Head of caudate nucleus (tissue), 42 donors: ENCODE measurements at regions of chr2 and their contacts with region 1.

Region 1: GRCh38 chr2:85538486-85539360 is at the start of gene MAT2A:
- DNase-seq: peak; percentile 81 to 97 (median 94)

Region 2: DNA sequence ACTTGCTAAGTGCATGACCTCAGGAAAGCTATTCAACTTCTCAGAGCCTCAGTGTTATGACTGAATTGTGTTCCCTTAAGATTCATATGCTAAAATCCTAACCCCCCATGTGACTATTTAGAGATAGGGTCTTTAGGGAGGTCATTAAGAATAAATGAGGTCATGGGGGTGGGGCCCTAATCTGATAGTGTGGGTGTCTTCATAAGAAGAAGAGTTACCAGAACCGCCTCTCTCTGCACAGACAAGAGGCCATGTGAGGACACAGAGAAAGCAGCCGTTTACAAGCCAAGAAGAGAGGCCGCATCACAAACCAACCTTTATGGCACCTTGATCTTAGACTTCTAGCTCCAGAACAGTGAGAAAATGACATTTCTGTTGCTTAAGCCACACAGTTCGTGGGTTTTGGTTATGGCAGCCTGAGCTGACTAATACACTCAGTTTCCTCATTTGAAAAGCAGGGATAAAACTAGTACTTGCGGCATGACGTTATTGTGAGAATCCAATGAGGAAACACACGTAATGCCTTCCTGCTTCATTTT is 110.3 kb before region 1 on chr2:
- intact Hi-C with region 1: loop called (anchors 5 kb)
- DNase-seq: no peak